WTC11 (cell line): ENCODE measurements at regions of chr2 and their contacts with region 1.

Region 1: GRCh38 chr2:231713730-231714430 is 5.6 kb downstream of the PTMA start:
- DNase-seq: peak; percentile 90
- ATAC-seq: peak; percentile 35
- H3K4me3 Mint-ChIP-seq: peak overlapping the region; percentile 56
- H3K27ac Mint-ChIP-seq: peak overlapping the region; percentile 98
- H3K4me1 Mint-ChIP-seq: peaks cover 34% of the 10 kb centered on the region
- H3K27me3 Mint-ChIP-seq: no peaks in the 10 kb centered on the region; the same call in 1 of the 2 replicates
- CTCF ChIP-seq: peak; percentile 93

Region 2: DNA sequence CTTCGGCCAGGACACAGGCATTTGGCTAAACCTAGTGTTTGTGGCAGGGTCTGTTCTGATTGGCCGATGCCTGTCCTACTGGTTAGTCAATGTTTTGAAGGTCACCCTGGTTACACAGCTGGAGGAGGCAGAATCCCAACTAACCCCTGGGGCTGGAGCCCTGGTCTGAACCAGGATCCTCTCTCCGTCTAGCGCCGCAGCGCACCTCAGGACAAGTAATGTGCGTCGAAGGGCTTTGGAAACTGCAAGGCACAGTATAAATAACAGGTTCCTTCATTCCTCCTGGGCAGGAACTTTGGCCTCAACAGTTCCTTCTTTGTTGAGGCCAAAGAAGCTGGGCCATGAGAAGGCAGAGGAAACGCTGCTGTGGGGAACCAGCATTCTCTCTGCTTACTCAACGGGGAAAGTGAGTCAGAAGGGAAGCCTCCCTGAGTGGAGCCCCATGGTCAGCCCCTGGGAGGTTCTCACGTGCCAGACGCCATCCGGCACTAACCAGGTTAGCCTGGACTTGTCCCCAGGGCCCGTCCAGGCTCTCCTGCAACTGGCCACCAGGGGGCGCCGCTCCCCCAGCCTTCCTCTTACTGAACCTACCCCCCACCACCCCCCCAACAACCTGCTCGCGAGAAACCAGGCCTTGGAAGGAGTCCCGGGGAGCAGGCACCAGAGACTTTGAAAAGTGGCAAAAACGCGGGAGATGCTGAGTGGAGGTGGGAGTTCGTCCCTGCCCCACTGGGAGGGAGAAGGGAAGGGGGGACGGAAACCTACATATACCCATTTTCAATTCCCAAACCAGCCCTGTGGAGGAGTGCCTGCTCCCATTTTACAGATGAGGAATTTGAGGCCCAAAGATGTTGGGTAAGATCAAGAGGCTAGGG is 101.5 kb before region 1 on chr2:
- CTCF ChIA-PET with region 1: interaction called, 82 read pairs
- POLR2A ChIA-PET with region 1: interaction called, 71 read pairs
- DNase-seq: peak; percentile 96
- ATAC-seq: peak; percentile 41
- H3K4me3 Mint-ChIP-seq: peak overlapping the region; percentile 77
- H3K27ac Mint-ChIP-seq: peak overlapping the region; percentile 100
- H3K4me1 Mint-ChIP-seq: peaks cover 58% of the 10 kb centered on the region
- H3K27me3 Mint-ChIP-seq: peaks cover 2% of the 10 kb centered on the region; the same call in 1 of the 2 replicates
- CTCF ChIP-seq: peak; percentile 99

Region 3: DNA sequence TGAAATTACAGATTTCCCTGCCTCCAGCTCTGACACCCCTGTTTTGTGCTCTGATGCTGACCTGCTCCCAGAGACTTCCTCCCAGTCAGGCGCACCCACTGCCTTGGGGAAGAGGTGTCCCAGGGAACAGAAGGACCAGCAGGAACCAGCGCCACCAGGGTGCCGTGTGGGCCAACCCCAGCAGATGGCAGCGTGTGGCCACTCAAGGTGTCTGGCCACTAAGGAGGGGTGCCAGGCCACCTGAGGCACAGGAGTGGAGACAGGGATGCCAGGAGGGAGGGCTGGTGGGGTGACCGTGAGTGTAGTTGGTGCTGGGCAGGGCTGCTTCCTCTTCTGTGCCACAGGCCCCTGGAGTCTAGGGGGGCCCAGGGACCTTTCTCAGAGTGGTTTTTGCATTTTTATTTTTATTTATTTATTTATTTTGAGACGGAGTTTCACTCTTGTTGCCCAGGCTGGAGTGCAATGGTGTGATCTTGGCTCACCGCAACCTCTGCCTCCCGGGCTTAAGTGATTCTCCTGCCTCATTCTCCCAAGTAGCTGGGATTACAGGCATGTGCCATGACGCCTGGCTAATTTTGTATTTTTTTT is 65.2 kb before region 1 on chr2:
- CTCF ChIA-PET with region 1: interaction called, 13 read pairs
- POLR2A ChIA-PET with region 1: interaction called, 3 read pairs
- DNase-seq: peak; percentile 84
- ATAC-seq: peak; percentile 89
- H3K4me3 Mint-ChIP-seq: no peak overlapping the region
- H3K27ac Mint-ChIP-seq: no peak overlapping the region
- H3K4me1 Mint-ChIP-seq: peaks cover 21% of the 10 kb centered on the region
- H3K27me3 Mint-ChIP-seq: no peaks in the 10 kb centered on the region
- CTCF ChIP-seq: no peak

Region 4: GRCh38 chr2:231680992-231681853 is 32.7 kb before region 1 on chr2:
- CTCF ChIA-PET with region 1: interaction called, 260 read pairs
- POLR2A ChIA-PET with region 1: interaction called, 61 read pairs
- DNase-seq: peak; percentile 94
- ATAC-seq: peak; percentile 75
- H3K4me3 Mint-ChIP-seq: peak overlapping the region; percentile 86
- H3K27ac Mint-ChIP-seq: peak overlapping the region; percentile 99
- H3K4me1 Mint-ChIP-seq: peaks cover 41% of the 10 kb centered on the region
- H3K27me3 Mint-ChIP-seq: no peaks in the 10 kb centered on the region
- CTCF ChIP-seq: no peak

Region 5: DNA sequence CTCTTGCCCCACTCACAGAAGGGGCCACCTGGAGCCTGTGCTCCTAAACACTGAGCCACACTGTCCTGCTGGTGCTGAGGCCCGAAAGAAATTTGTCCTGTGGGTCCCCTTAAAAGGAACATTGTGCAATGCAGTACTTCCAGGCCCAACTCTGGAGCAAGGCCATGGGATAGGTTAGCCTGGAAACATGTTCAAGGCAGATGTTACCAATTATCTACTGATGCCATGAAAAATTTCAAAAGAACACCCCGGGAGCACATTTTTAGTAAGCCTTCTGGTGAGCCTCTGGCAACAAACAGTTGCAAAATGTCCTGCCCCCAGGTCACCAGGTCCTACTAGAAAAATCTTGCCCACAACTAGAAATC is 17.9 kb before region 1 on chr2:
- CTCF ChIA-PET with region 1: interaction called, 125 read pairs
- POLR2A ChIA-PET with region 1: interaction called, 8 read pairs
- DNase-seq: no peak
- ATAC-seq: no peak
- H3K4me3 Mint-ChIP-seq: no peak overlapping the region
- H3K27ac Mint-ChIP-seq: no peak overlapping the region
- H3K4me1 Mint-ChIP-seq: peaks cover 6% of the 10 kb centered on the region
- H3K27me3 Mint-ChIP-seq: peaks cover 3% of the 10 kb centered on the region; the same call in 1 of the 2 replicates
- CTCF ChIP-seq: no peak

Region 6: GRCh38 chr2:231732604-231733003 is 18.7 kb after region 1 on chr2:
- CTCF ChIA-PET with region 1: interaction called, 17 read pairs
- POLR2A ChIA-PET with region 1: interaction called, 4 read pairs
- DNase-seq: no peak
- ATAC-seq: peak; percentile 92
- H3K4me3 Mint-ChIP-seq: no peak overlapping the region
- H3K27ac Mint-ChIP-seq: no peak overlapping the region; the same call in 1 of the 2 replicates
- H3K4me1 Mint-ChIP-seq: peaks cover 2% of the 10 kb centered on the region; the same call in 1 of the 2 replicates
- H3K27me3 Mint-ChIP-seq: no peaks in the 10 kb centered on the region
- CTCF ChIP-seq: no peak

Region 7: DNA sequence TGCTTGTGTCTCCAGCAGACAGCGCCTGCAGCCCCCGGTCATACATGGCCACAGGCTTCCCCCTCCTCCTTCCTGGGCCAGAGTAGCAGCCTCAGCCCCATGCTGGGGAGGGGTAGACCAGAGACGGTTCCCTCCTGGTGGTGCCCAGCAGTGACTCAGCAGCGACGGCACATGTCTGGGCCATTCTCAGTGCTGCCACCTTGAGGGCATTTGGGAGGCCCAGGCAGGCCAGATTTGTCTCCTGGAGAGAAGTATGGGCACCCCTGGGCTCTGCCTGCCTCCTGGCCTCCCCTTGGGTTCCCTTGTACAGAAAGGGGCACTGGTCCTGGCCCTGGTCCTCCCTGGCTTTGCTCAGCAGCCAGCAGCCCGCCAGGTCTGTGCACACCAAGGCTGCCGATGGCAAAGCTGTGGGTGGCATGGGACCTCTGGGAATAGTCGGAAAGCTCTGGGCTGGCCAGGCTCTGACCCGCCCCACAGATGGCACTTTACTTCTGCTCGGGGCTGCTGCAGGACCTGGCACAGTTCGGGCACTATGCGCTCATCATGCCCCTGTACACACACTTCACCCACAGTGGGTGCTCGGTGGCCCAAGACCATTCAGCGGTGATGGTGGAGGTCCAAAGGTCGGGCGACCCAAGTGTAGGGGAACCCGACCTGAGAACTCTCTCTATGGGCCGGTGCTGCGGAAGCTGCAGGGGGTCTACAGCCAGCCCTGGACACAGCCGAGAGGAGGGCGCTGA is 730.7 kb after region 1 on chr2:
- CTCF ChIA-PET with region 1: no interaction called
- POLR2A ChIA-PET with region 1: no interaction called
- DNase-seq: peak; percentile 71
- ATAC-seq: peak; percentile 15
- H3K4me3 Mint-ChIP-seq: no peak overlapping the region
- H3K27ac Mint-ChIP-seq: no peak overlapping the region
- H3K4me1 Mint-ChIP-seq: peaks cover 6% of the 10 kb centered on the region
- H3K27me3 Mint-ChIP-seq: no peaks in the 10 kb centered on the region; the same call in 1 of the 2 replicates
- CTCF ChIP-seq: peak; percentile 42